Endothelial cell of umbilical vein (primary cell): ENCODE measurements at regions of chr1 and their contacts with region 1.

Region 1: GRCh38 chr1:36638268-36638667 is 155.6 kb upstream of the CSF3R start:
- DNase-seq: no peak
- H3K4me3 ChIP-seq: no peak overlapping the region
- H3K27ac ChIP-seq: no peak overlapping the region
- H3K4me1 ChIP-seq: no peaks in the 10 kb centered on the region
- H3K27me3 ChIP-seq: no peaks in the 10 kb centered on the region
- CTCF ChIP-seq: no peak
- POLR2A ChIP-seq: no peak

Region 2: DNA sequence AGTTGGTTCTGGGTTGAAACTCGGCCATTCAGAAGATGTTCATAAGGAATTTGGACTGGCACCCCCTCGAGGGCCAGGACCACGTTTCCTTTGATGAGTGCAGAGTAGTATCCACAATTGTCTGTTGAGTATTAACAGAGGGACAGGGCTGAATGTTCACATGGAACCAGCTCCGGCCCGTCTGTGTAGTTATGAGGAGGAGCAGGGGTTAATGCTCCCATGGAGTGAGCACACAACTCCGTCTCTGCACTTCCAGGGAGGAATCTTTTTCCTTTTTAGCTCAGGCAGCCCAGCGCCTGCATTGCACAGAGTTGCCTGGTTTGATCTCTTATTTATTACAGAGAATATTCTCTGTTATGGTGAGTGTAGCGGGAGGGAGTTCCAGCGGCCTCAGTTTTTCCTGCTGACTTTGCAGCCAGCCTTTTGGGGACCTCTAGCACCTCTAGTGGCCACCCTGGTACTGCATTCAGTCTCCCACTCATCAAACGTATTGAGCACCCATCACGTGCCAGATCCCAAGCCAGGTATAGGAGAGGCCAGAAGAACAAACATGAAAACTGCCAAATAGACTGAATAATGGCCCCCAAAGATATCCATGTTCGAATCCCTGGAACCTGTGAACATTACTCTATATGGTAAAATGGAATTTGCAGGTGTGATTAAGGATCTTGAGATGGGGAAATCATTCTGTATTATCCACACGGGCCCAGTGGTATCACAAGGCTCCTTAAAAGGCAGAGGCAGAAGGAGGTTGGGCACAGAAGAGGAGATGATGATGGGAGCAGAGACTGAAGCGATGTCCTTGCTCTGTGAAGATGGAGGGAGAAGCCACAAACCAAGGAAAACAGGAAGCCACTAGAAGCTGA is 12.2 kb after region 1 on chr1:
- CTCF ChIA-PET with region 1: interaction called, 10 read pairs
- POLR2A ChIA-PET with region 1: no interaction called
- dilution Hi-C with region 1: no loop called
- intact Hi-C with region 1: no loop called
- DNase-seq: peak; percentile 59
- H3K4me3 ChIP-seq: no peak overlapping the region
- H3K27ac ChIP-seq: no peak overlapping the region
- H3K4me1 ChIP-seq: no peaks in the 10 kb centered on the region
- H3K27me3 ChIP-seq: no peaks in the 10 kb centered on the region
- CTCF ChIP-seq: peak; percentile 85 to 89
- POLR2A ChIP-seq: no peak